ENCODE measurements at regions of chr5 and their contacts with region 1.

Region 1: GRCh38 chr5:132526290-132526973 is 16.9 kb downstream of the IL5 start:
- DNase-seq: peak; percentile 63
- ATAC-seq: peak; percentile 75
- H3K4me3 Mint-ChIP-seq: no peak overlapping the region
- H3K27ac Mint-ChIP-seq: peak overlapping the region; percentile 31
- H3K4me1 Mint-ChIP-seq: peaks cover 55% of the 10 kb centered on the region
- H3K27me3 Mint-ChIP-seq: no peaks in the 10 kb centered on the region

Region 2: DNA sequence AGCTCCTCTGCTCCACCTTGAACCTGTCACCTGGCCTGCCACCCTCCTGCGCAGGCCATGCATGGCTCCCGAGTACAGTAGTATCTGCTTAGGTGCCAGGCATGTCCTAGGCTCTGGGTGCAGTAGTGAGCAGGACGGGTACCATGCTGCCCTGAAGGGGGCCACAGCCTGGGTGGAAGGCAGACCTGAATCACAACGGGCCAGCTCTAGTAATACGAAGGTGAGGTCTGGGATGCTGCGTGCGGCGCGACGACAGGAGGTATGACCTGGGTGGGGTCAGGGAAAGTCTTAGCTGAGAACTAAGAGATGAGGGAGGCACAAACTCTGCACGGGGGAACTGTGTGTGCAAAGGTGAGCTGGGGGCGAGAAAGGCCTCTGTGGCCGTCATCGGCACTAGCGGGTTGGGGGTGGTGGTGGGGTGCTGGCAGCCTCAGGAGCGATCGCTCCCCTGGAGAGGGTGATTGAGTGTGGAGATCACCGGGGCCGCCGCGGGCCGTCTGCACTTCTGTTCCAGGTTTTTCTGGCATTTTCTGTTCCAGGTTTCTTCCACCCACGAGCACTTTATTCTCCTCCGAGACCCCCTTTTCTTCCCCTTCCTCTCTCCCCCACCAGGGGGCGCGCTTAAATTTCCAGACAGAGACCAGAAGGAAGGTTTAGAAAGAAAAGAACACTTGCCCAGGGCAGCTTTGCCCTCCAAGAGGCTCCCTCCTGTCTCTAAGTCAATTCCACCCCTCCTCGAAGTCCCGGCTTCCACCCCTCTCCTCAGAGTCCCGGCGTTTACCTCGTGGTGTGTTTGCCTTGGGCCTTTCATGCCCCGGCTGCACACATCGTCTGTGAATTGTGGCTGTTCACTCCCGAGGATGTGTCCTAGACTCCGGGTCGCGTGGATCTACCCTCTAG is 253.9 kb before region 1 on chr5:
- CTCF ChIA-PET with region 1: no interaction called
- DNase-seq: peak; percentile 70
- ATAC-seq: peak; percentile 45
- H3K4me3 Mint-ChIP-seq: no peak overlapping the region
- H3K27ac Mint-ChIP-seq: no peak overlapping the region
- H3K4me1 Mint-ChIP-seq: peaks cover 5% of the 10 kb centered on the region
- H3K27me3 Mint-ChIP-seq: peaks cover 8% of the 10 kb centered on the region

Region 3: DNA sequence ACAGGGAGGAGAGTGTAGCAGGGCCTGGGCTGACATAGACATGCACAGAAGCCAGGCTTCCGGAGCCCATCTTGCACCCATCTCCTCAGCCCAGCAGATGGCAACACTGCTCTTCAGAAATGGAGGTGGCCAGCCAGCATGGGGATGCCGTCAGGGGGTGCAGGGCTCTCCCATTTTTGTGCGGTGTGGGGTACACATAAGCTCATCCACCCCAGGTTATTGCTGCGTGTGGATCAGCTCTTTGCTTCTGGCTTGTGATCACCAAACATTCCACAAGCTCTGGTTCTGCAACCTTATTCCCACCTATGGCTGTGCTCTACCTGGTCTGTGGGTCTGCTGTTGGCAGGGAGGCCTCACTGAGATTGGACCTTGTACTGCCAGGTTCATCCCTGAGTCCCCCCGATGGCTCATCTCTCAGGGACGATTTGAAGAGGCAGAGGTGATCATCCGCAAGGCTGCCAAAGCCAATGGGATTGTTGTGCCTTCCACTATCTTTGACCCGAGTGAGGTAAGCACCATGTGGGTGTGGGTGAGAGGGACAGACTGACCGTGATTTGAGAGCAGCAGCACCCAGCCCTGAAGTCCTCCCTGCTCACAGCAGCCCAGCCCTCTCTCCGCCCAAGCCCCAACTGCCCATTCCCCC is 139.7 kb before region 1 on chr5:
- CTCF ChIA-PET with region 1: interaction called, 22 read pairs
- DNase-seq: peak; percentile 88
- ATAC-seq: peak; percentile 96
- H3K4me3 Mint-ChIP-seq: no peak overlapping the region
- H3K27ac Mint-ChIP-seq: peak overlapping the region; percentile 69
- H3K4me1 Mint-ChIP-seq: peaks cover 50% of the 10 kb centered on the region
- H3K27me3 Mint-ChIP-seq: no peaks in the 10 kb centered on the region

Region 4: GRCh38 chr5:132419502-132420468 is 106.6 kb before region 1 on chr5:
- CTCF ChIA-PET with region 1: no interaction called
- DNase-seq: peak; percentile 79
- ATAC-seq: peak; percentile 75
- H3K4me3 Mint-ChIP-seq: peak overlapping the region; percentile 55
- H3K27ac Mint-ChIP-seq: peak overlapping the region; percentile 98
- H3K4me1 Mint-ChIP-seq: peaks cover 96% of the 10 kb centered on the region
- H3K27me3 Mint-ChIP-seq: no peaks in the 10 kb centered on the region

Region 5: GRCh38 chr5:132540764-132541163 is 14.3 kb after region 1 on chr5:
- CTCF ChIA-PET with region 1: interaction called, 31 read pairs
- DNase-seq: no peak
- ATAC-seq: no peak
- H3K4me3 Mint-ChIP-seq: no peak overlapping the region
- H3K27ac Mint-ChIP-seq: no peak overlapping the region
- H3K4me1 Mint-ChIP-seq: peaks cover 26% of the 10 kb centered on the region
- H3K27me3 Mint-ChIP-seq: no peaks in the 10 kb centered on the region

Region 6: DNA sequence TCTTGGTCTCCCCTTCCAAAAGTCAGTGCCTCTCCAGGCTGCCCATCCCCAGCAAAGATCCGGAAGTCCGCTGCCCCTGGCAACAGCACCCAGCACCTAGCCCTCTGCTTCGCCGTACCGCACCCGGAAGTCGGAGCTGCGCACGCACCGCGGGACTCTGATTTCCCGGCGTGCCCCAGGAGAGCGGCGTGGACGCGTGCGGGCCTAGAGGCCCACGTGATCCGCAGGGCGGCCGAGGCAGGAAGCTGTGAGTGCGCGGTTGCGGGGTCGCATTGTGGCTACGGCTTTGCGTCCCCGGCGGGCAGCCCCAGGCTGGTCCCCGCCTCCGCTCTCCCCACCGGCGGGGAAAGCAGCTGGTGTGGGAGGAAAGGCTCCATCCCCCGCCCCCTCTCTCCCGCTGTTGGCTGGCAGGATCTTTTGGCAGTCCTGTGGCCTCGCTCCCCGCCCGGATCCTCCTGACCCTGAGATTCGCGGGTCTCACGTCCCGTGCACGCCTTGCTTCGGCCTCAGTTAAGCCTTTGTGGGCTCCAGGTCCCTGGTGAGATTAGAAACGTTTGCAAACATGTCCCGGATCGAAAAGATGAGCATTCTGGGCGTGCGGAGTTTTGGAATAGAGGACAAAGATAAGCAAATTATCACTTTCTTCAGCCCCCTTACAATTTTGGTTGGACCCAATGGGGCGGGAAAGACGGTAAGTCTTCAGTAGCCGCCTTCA is 30.5 kb after region 1 on chr5 and contains the start of gene RAD50:
- CTCF ChIA-PET with region 1: interaction called, 11 read pairs
- DNase-seq: peak; percentile 97
- ATAC-seq: peak; percentile 97
- H3K4me3 Mint-ChIP-seq: peak within 1 kb of the TSS; percentile 92
- H3K27ac Mint-ChIP-seq: peak within 1 kb of the TSS; percentile 95
- H3K4me1 Mint-ChIP-seq: peaks cover 27% of the 10 kb centered on the region
- H3K27me3 Mint-ChIP-seq: no peaks in the 10 kb centered on the region
- total RNA-seq, gene RAD50: 39.7 to 51.6 TPM

Region 7: DNA sequence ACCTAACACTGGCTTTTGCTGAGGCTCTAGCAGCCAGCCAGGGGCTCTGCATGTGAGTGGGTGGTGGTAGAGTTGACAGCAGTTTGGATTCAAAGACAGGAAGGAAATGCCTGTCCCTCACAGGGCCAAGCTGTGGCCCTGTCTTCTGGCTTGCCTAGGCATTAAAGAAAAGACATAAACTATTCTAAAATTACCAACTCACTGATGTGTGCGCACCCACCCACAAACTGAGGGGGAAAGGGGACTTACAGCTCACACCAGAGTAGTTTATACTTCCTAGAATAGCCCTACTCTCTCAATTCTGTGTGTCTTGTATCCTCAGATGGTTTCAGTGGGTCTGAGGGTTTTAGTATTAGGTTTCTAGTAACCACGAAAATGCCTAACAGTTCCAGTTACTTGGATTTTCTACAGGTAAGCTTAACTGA is 113.3 kb after region 1 on chr5:
- CTCF ChIA-PET with region 1: interaction called, 10 read pairs
- DNase-seq: peak; percentile 81
- ATAC-seq: peak; percentile 54
- H3K4me3 Mint-ChIP-seq: peak overlapping the region; percentile 16
- H3K27ac Mint-ChIP-seq: peak overlapping the region; percentile 86
- H3K4me1 Mint-ChIP-seq: peaks cover 89% of the 10 kb centered on the region
- H3K27me3 Mint-ChIP-seq: no peaks in the 10 kb centered on the region

Region 8: DNA sequence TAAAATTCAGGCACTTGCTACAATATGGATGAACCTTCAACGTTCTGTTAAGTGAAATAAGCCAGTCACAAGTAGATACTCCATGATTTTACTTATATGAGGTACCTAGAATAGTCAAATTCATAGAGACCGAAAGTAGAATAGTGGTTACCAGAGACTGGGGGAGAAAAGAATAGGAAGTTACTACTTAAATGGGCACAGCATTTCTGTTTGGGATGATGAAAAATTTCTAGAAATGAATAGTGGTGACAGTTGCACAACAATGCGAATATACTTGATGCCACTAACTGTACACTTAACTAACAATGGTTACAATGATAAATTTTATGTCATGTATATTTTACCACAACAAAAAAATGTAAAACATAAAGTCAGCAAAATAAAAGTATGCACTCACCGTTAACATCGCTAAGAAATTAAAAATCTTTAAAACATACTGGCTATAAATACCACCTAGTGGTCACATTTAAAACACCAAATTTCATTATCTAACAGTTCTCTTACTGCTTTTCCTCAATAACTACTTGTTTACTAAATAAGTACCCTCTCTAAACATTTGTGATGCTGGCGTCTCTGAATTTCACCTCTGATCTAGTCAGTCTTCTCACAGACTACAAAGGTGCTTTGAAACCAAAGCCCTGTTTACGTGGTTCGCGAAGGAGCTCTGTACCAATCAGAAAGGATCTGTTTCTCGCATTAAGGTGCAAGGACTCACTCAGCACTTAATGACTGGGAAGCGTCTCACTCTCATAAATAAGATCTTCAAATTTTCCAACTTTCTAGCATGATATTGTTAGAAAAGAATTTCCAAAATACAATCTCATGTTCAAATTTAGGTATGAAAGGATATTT is 188.2 kb after region 1 on chr5:
- CTCF ChIA-PET with region 1: interaction called, 27 read pairs
- DNase-seq: no peak
- ATAC-seq: peak; percentile 70
- H3K4me3 Mint-ChIP-seq: peak overlapping the region; percentile 3
- H3K27ac Mint-ChIP-seq: peak overlapping the region; percentile 62
- H3K4me1 Mint-ChIP-seq: peaks cover 22% of the 10 kb centered on the region
- H3K27me3 Mint-ChIP-seq: no peaks in the 10 kb centered on the region

Region 9: DNA sequence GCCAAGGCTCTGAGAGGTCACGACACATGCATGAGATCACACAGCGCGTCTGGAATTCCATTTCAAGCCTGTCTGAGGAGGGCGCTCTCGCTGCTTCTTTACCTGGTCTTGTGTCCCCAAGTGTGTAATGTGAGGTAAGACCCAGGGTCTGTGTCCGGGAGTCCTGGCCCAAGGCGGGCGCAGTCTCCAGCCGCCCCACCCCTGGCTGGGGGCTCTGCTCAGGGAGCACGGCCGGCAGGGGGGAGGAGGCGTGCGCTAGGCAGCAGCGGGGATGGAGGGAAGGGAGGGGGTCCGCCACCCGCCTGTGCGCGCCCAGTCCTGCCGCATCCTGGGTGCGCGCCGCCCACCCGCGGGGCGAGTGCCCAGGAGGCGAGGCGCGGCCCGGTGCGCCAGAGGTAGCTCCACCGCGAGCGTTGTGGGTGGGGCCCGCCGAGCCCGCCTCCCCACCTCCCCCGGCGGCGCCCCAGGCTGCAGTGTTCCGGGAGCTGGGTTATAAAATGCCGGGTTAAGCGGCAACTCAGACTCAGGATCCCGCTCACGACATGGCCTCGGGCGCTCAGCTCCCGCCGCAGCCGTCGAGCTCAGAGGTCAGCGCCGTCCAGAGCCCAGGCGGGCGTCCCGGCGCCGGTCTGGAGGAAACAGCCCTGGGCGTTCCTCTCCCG is 220.7 kb after region 1 on chr5 and contains the start of gene CCNI2:
- CTCF ChIA-PET with region 1: interaction called, 10 read pairs
- DNase-seq: peak; percentile 73
- ATAC-seq: peak; percentile 87
- H3K4me3 Mint-ChIP-seq: peak within 1 kb of the TSS; percentile 76
- H3K27ac Mint-ChIP-seq: peak within 1 kb of the TSS; percentile 70
- H3K4me1 Mint-ChIP-seq: peaks cover 45% of the 10 kb centered on the region
- H3K27me3 Mint-ChIP-seq: peaks cover 10% of the 10 kb centered on the region
- total RNA-seq, gene CCNI2: 16.7 to 52.5 TPM

Measured in activated CD8-positive, alpha-beta memory T cell treated with anti-CD3 and anti-CD28 coated beads, Interleukin-2, amount 10 ng/mL, durations not matched to agents 7 days and 5 days (primary cell).